Activated naive CD4-positive, alpha-beta T cell treated with anti-CD3 and anti-CD28 coated beads for 36 hours (primary cell): ENCODE measurements at regions of chr2 and their contacts with region 1.

Region 1: DNA sequence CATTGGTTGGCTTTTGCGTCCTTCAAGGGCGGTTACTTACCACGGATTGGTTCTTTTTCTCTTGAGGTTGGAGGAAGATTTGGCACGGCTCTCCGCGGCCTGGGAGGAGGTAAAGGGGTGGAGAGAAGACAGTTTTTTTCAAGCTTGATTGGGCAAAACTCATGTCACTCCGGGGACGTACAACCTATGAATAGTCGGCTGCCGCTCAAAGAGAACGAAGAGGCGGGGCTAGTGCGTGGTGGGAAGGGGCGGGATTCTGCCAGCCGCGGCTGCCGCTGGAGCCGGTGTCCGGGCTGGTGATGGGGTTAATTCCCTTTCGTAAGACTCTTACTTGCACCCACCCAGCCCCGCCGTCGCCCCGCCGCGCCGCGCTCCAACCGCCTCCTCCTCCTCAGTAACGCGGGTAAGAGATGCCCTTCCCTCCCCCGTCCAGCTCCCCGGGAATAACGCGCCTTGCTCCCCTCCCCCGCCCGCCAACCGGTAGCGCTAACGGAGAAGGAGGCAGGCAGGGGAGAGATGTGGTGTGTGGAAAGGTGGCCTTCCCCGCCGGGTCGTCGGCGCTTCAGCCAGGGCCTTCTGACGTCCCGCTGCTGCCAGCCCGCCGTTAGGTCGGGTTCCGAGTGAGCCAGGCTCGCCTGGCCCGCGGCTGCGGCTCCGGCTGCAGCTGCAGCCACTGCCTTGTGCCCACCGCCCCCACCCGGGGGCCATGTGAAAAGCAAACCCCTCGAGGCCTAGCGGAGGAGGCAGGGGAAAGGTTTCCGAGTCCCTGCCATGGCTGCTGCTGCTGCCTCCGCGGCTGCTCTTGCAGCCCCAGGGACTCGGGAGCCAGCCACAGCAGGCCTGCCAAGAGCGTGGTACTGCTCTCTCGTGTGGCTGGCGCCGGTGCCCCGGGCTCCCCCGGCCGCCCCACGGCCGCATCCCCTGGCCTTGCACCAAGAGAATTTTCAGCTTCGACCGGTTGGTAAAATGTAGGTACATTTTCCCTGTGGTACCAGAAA is at the start of gene R3HDM1:
- DNase-seq: peak; percentile 98
- H3K4me3 Mint-ChIP-seq: no peak within 1 kb of the TSS
- H3K27ac Mint-ChIP-seq: peak within 1 kb of the TSS; percentile 39
- H3K4me1 Mint-ChIP-seq: peaks cover 39% of the 10 kb centered on the region
- H3K27me3 Mint-ChIP-seq: no peaks in the 10 kb centered on the region
- total RNA-seq, gene R3HDM1: 61.9 to 73.1 TPM

Region 2: DNA sequence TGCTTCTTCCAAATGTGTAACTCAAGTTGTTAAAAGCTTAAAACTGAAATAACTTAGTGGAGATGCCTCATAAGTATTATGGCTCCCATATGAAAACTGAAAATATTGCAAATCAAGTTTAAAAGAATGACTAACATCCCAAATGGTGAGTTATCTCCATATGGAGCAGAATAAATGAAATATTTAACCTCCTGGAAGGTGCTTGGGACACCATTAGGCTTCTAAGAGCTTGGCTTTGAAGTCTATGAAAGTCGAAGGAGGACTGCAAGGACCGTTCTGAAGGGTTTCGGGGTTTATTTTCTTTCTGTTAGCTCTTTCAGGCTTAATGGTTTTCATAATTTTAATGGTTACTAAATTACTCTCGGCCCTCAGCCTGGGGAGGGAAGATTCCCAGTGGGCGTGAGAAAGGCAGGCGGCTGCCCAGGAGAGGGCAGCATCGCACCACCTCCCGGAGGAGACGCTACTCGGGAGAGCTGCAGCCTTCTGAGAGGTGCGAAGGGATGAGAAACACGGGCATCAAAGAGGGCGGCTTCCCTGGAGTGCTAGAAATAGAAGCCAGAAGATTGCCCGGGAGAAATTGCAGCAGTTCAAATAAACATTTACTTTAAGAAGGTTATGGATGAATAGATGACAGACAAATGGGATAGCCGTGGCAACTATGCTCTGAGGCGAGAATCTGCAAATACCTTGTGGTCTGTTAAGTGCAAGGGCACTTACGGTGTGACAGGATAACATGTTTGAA is 527.4 kb before region 1 on chr2:
- CTCF ChIA-PET with region 1: no interaction called
- intact Hi-C with region 1: loop called (anchors 2 kb)
- DNase-seq: peak; percentile 79
- H3K4me3 Mint-ChIP-seq: no peak overlapping the region
- H3K27ac Mint-ChIP-seq: no peak overlapping the region
- H3K4me1 Mint-ChIP-seq: peaks cover 5% of the 10 kb centered on the region
- H3K27me3 Mint-ChIP-seq: peaks cover 12% of the 10 kb centered on the region

Region 3: GRCh38 chr2:135590619-135591260 is 59.2 kb after region 1 on chr2:
- CTCF ChIA-PET with region 1: no interaction called
- intact Hi-C with region 1: loop called (anchors 2 kb)
- DNase-seq: no peak
- H3K4me3 Mint-ChIP-seq: no peak overlapping the region
- H3K27ac Mint-ChIP-seq: no peak overlapping the region
- H3K4me1 Mint-ChIP-seq: peaks cover 37% of the 10 kb centered on the region
- H3K27me3 Mint-ChIP-seq: no peaks in the 10 kb centered on the region

Region 4: DNA sequence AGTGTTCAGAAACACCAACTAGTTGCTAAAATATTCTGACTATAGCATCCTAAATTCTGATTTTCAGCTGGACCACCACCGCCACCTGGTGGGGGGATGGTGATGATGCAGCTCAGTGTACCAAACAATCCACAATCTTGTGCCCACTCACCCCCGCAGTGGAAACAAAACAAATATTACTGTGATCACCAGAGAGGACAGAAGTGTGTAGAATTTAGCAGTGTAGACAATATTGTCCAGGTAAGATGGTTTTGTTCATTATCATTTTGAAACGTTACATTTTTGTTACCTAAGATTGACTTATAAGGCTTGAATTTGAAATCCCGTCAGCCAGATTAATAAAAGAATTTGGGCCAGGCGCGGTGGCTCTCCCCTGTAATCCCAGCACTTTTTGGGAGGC is 178.5 kb after region 1 on chr2:
- CTCF ChIA-PET with region 1: interaction called, 5 read pairs
- intact Hi-C with region 1: loop called (anchors 2 kb)
- DNase-seq: peak; percentile 82
- H3K4me3 Mint-ChIP-seq: no peak overlapping the region
- H3K27ac Mint-ChIP-seq: no peak overlapping the region
- H3K4me1 Mint-ChIP-seq: no peaks in the 10 kb centered on the region
- H3K27me3 Mint-ChIP-seq: no peaks in the 10 kb centered on the region

Region 5: DNA sequence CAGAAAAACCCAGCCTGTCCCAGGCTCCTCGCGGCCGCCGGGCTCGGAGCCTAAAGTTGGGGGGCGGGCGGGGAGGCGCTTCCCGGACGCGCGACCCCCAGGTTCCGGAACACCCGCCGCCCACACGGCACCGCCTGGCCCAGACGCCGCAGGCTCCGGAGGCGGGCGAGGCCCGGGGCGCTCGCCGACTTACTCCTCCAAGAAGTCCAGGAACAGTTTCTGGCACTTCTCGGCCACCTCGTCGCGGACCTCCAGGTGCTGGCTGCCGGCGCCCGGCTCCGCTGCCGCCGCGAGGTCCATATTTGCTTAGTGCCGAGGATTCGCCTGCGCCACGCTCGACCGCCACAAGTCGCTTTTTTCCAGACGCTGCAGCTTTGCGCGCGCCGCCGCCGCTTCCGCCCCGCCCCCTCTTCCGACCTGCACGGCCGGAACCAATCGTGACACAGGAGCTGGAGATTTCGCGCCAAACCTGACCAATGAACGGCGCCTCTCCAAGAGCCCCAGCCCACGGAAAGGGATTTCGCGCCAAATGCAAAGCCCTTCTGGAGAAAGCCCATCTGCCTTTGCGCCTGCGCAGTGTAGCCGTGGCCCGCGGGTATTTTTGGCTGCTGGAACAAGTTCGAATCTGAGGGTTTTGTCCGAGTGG is 344.7 kb after region 1 on chr2 and contains the start of gene MCM6:
- CTCF ChIA-PET with region 1: no interaction called
- intact Hi-C with region 1: loop called (anchors 1 kb)
- DNase-seq: peak; percentile 100
- H3K4me3 Mint-ChIP-seq: peak within 1 kb of the TSS; percentile 91
- H3K27ac Mint-ChIP-seq: peak within 1 kb of the TSS; percentile 99
- H3K4me1 Mint-ChIP-seq: peaks cover 39% of the 10 kb centered on the region
- H3K27me3 Mint-ChIP-seq: no peaks in the 10 kb centered on the region
- total RNA-seq, gene MCM6: 221 to 226 TPM

Region 6: GRCh38 chr2:137155356-137156104 is 1624.0 kb after region 1 on chr2:
- CTCF ChIA-PET with region 1: no interaction called
- intact Hi-C with region 1: no loop called
- DNase-seq: no peak
- H3K4me3 Mint-ChIP-seq: no peak overlapping the region
- H3K27ac Mint-ChIP-seq: no peak overlapping the region
- H3K4me1 Mint-ChIP-seq: no peaks in the 10 kb centered on the region
- H3K27me3 Mint-ChIP-seq: peaks cover 1% of the 10 kb centered on the region